Activated CD4-positive, alpha-beta T cell treated with anti-CD3 and anti-CD28 coated beads for 36 hours (primary cell): ENCODE measurements at regions of chr19 and their contacts with region 1.

Region 1: GRCh38 chr19:38899447-38900219 is at the starts of genes NFKBIB and SIRT2:
- DNase-seq: peak; percentile 100
- ATAC-seq: peak; percentile 93
- H3K4me3 Mint-ChIP-seq: peak within 1 kb of the TSS; percentile 88
- H3K27ac Mint-ChIP-seq: peak within 1 kb of the TSS; percentile 91
- H3K4me1 Mint-ChIP-seq: peaks cover 40% of the 10 kb centered on the region
- H3K27me3 Mint-ChIP-seq: no peaks in the 10 kb centered on the region
- total RNA-seq, gene NFKBIB: 49.4 to 52.5 TPM
- total RNA-seq, gene SIRT2: 17.8 to 23.1 TPM

Region 2: DNA sequence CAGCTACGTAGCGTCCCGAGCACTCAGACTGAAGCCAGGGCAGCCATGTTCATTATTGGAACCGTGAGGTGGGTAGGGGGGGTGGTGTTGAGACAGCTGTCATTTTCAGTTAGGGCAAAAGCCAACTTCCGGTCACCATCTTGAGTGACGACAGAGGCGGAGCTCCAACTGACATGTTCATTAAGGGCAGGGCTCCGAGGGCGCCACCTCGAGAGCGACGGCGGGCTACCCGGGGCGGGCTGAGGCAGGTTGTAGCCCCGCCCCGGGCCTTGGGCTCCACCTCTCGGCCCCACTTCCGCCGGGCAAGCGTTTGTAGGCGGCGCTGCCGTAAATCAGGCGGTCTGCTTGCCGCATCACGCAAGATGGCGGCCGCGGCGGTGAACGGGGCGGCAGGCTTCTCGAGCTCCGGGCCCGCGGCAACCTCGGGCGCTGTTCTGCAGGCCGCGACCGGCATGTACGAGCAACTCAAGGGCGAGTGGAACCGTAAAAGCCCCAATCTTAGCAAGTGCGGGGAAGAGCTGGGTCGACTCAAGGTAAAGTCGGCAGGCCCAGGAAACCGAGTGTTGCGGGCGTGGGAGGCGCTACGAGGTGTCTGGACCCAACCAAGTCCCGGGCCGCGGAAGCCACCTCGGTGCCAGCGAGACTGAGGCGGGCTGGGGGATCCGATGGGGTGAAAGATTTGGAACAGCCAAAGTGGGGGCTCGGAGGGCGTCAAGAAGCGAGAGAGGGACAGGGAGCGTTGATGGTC is 525.0 kb before region 1 on chr19 and contains the start of gene PSMD8:
- CTCF ChIA-PET with region 1: no interaction called
- POLR2A ChIA-PET with region 1: no interaction called
- intact Hi-C with region 1: loop called in 1 of 2 experiments (anchors 1 kb)
- DNase-seq: peak; percentile 99
- ATAC-seq: peak; percentile 99
- H3K4me3 Mint-ChIP-seq: peak within 1 kb of the TSS; percentile 97
- H3K27ac Mint-ChIP-seq: peak within 1 kb of the TSS; percentile 98
- H3K4me1 Mint-ChIP-seq: peaks cover 26% of the 10 kb centered on the region
- H3K27me3 Mint-ChIP-seq: peaks cover 5% of the 10 kb centered on the region
- total RNA-seq, gene PSMD8: 219 to 275 TPM

Region 3: DNA sequence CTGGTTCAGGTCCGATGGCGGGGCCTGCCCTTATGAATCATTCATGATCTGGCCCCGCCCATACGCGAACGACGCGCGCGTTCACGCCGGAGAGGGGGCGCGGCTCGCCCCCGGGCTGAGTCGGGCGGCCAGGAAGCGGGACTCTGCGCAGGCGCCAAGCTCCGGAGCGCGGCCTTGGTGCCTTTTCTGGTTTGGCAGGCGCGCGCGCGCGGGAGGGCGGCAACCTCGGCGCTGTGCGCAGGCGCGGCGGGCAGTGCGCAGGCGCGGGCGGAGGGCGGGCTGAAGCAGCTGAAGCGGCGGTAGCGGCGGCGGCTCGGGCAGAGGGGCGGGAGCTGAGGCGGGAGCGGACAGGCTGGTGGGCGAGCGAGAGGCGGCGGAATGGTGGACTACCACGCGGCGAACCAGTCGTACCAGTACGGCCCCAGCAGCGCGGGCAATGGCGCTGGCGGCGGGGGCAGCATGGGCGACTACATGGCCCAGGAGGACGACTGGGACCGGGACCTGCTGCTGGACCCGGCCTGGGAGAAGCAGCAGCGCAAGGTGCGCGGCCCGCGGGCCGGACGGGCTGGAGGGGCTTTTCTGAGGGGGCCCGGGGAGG is 252.2 kb before region 1 on chr19 and contains the start of gene ACTN4:
- CTCF ChIA-PET with region 1: no interaction called
- POLR2A ChIA-PET with region 1: no interaction called
- intact Hi-C with region 1: loop called in 1 of 2 experiments (anchors 1 kb)
- DNase-seq: peak; percentile 100
- ATAC-seq: peak; percentile 92
- H3K4me3 Mint-ChIP-seq: peak within 1 kb of the TSS; percentile 98
- H3K27ac Mint-ChIP-seq: peak within 1 kb of the TSS; percentile 81
- H3K4me1 Mint-ChIP-seq: peaks cover 39% of the 10 kb centered on the region
- H3K27me3 Mint-ChIP-seq: peaks cover 10% of the 10 kb centered on the region
- total RNA-seq, gene ACTN4: 181 to 182 TPM

Region 4: DNA sequence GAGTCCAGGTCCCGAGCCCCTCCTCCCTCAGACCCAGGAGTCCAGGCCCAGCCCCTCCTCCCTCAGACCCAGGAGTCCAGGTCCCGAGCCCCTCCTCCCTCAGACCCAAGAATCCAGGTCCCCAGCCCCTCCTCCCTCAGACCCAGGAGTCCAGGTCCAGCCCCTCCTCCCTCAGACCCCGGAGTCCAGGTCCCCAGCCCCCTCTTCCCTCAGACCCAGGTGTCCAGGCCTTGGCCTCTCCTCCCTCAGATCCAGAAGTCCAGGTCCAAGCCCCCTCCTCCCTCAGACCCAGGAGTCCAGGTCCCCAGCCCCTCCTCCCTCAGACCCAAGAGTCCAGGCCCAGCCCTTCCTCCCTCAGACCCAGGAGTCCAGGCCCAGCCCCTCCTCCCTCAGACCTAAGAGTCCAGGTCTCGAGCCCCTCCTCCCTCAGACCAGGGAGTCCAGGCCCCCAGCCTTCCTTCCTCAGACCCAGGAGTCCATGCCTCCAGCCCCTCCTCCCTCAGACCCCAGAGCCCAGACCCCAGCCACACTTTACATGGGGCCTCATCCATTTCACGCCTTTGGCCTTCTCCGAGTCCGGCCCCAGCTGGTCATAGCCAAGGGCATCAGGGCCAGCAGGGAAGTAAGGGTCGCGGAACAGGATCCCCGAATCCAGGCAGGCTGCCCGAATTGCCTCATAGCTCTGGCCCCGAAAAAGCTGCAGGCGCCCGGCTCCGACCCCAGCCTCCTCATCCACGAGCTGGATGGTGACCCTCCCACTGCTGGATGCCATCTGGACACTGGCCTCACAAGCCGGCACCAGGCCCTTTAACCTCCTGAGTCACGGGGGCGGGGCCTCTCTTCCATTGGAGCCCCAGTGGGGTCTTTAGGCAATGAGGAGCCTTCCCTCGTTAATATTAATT is 156.0 kb before region 1 on chr19:
- CTCF ChIA-PET with region 1: no interaction called
- POLR2A ChIA-PET with region 1: interaction called, 10 read pairs
- intact Hi-C with region 1: no loop called
- DNase-seq: no peak
- ATAC-seq: no peak
- H3K4me3 Mint-ChIP-seq: no peak overlapping the region
- H3K27ac Mint-ChIP-seq: no peak overlapping the region
- H3K4me1 Mint-ChIP-seq: peaks cover 6% of the 10 kb centered on the region
- H3K27me3 Mint-ChIP-seq: no peaks in the 10 kb centered on the region

Region 5: GRCh38 chr19:38869856-38870607 is 29.6 kb before region 1 on chr19:
- CTCF ChIA-PET with region 1: interaction called, 3 read pairs
- POLR2A ChIA-PET with region 1: no interaction called
- intact Hi-C with region 1: loop called in 1 of 2 experiments (anchors 1 kb)
- DNase-seq: peak; percentile 94
- ATAC-seq: peak; percentile 85
- H3K4me3 Mint-ChIP-seq: peak overlapping the region; percentile 76
- H3K27ac Mint-ChIP-seq: peak overlapping the region; percentile 86
- H3K4me1 Mint-ChIP-seq: peaks cover 37% of the 10 kb centered on the region
- H3K27me3 Mint-ChIP-seq: no peaks in the 10 kb centered on the region

Region 6: GRCh38 chr19:39390755-39391592 is 491.3 kb after region 1 on chr19 and contains the starts of genes MED29 and PAF1:
- CTCF ChIA-PET with region 1: no interaction called
- POLR2A ChIA-PET with region 1: no interaction called
- intact Hi-C with region 1: loop called in 1 of 2 experiments (anchors 1 kb)
- DNase-seq: peak; percentile 98
- ATAC-seq: peak; percentile 97
- H3K4me3 Mint-ChIP-seq: peak within 1 kb of the TSS; percentile 99
- H3K27ac Mint-ChIP-seq: peak within 1 kb of the TSS; percentile 98
- H3K4me1 Mint-ChIP-seq: peaks cover 28% of the 10 kb centered on the region
- H3K27me3 Mint-ChIP-seq: no peaks in the 10 kb centered on the region
- total RNA-seq, gene MED29: 24.0 to 34.6 TPM
- total RNA-seq, gene PAF1: 40.4 to 54.2 TPM